ENCODE measurements at regions of chr20 and their contacts with region 1.

Region 1: DNA sequence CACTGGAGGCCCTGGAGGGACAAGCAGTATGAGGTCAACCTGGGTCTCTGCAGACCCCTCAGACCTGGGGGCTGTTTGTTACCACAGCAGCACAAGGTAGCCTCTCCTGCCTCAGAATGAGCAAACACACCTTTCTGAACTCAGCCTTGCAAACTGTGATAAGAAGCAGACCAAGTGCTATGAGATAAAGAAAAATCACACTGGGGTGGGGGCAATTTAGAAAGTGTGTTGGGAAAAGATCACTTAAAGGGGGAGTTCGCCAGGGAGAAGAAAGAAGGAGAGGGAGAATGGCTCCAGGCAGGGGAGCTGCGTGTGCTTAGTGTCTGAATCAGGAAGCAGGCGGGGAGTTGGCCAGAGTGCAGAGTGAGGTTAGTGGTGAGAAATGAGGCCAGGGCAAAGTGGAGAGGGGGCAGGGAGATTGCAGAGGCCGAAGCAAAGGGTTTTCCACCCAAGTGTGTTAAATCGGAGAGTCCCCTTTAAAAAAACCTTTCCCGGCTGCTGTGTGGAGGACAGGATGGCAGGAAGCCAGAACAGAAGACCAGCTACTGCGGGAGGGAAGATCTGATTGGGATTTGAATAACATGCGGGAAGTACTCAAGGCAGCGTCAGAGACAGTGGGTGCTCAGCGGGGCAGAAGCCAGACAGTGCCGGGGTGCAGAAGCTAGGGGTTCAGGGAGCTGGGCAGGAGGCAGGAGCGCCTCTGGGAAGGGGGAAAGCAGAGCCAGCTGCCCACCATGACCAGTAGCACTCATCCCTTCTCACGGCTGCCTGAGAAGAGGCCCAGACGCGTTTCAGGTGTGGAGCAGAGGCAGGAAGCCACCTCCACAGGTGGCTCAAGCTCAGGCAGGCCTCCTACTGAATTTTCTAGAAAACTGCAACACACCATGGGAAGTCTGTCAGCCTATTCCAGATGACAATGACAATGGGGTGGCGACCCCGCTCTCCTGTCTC is 9.0 kb downstream of the ADA start:
- DNase-seq: peak in 4 of 5 donors; percentile 34 to 53 (median 39)
- H3K4me3 ChIP-seq: peak overlapping the region; percentile 1 to 17
- H3K4me3 Mint-ChIP-seq: peak overlapping the region; percentile 36 to 87 (median 68)
- H3K27ac ChIP-seq: peak overlapping the region; percentile 82
- H3K27ac Mint-ChIP-seq: peak overlapping the region; percentile 94 to 99 (median 96)
- H3K4me1 ChIP-seq: peaks cover 68% of the 10 kb centered on the region
- H3K4me1 Mint-ChIP-seq: peaks cover 54 to 80% (median 67%) of the 10 kb centered on the region in 4 donors
- H3K27me3 ChIP-seq: no peaks in the 10 kb centered on the region
- H3K27me3 Mint-ChIP-seq: no peaks in the 10 kb centered on the region

Region 2: GRCh38 chr20:44210422-44211176 is 431.9 kb before region 1 on chr20 and contains the start of gene OSER1:
- CTCF ChIA-PET with region 1: no interaction called
- POLR2A ChIA-PET with region 1: interaction called, 3 read pairs
- intact Hi-C with region 1: loop called (anchors 10 kb)
- DNase-seq: peak; percentile 99
- H3K4me3 ChIP-seq: peak within 1 kb of the TSS; percentile 77 to 78
- H3K4me3 Mint-ChIP-seq: peak within 1 kb of the TSS; percentile 85 to 99 (median 94)
- H3K27ac ChIP-seq: peak within 1 kb of the TSS; percentile 98
- H3K27ac Mint-ChIP-seq: peak within 1 kb of the TSS; percentile 90 to 100 (median 98)
- H3K4me1 ChIP-seq: peaks cover 53% of the 10 kb centered on the region
- H3K4me1 Mint-ChIP-seq: peaks cover 42 to 79% (median 56%) of the 10 kb centered on the region in 4 donors
- H3K27me3 ChIP-seq: no peaks in the 10 kb centered on the region
- H3K27me3 Mint-ChIP-seq: no peaks in the 10 kb centered on the region
- total RNA-seq, gene OSER1: 35.5 to 36.6 TPM

Region 3: DNA sequence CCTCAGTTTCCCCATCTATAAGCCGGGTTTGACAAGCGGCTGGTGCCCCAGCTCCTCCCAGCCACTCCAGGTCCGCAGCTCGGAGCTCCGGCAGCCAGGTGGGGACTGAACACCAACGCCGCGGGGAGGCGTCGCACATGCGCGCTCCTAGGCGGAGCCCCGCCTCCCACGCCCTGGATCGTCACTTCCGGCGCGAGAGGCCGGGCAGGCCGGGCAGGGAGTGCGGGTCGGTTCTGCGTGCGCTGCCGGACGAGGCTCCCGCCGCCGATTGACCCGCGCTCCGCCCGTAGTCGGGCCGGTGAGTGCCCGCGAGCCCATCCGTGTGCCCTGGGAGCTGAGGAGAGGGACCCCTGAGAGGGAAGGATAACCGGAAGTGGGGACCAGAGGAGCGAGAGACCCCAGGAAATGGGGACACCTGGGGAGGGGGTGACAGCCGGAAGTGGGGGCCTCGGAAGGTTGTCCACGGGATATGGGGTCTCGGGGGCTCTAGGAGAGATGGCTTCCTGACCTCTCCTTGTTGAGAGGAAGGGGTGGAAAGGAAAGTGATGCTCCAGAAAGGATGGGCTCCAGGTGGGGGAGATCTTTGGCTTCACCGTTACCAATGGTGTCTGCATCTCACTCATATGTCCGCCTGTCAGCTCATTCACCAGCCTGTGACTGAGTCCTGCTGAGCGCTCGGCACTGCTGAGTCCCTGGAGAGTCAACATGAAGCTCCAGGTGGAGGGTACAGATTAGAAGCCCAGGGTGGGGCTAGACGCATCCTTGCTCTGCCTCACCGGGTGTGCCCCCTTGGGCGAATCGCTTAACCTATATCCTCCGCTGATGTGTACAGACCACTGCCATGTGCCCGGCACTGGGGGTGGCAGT is 166.6 kb before region 1 on chr20 and contains the start of gene TTPAL:
- CTCF ChIA-PET with region 1: no interaction called
- POLR2A ChIA-PET with region 1: interaction called, 10 read pairs
- intact Hi-C with region 1: no loop called
- DNase-seq: peak; percentile 85 to 89 (median 89)
- H3K4me3 ChIP-seq: peak within 1 kb of the TSS; percentile 53 to 72
- H3K4me3 Mint-ChIP-seq: peak within 1 kb of the TSS; percentile 88 to 94 (median 92)
- H3K27ac ChIP-seq: peak within 1 kb of the TSS; percentile 95
- H3K27ac Mint-ChIP-seq: peak within 1 kb of the TSS; percentile 92 to 99 (median 96)
- H3K4me1 ChIP-seq: peaks cover 17% of the 10 kb centered on the region
- H3K4me1 Mint-ChIP-seq: peaks cover 13 to 32% (median 25%) of the 10 kb centered on the region in 4 donors
- H3K27me3 ChIP-seq: no peaks in the 10 kb centered on the region
- H3K27me3 Mint-ChIP-seq: no peaks in the 10 kb centered on the region
- total RNA-seq, gene TTPAL: 17.5 to 18.9 TPM

Region 4: DNA sequence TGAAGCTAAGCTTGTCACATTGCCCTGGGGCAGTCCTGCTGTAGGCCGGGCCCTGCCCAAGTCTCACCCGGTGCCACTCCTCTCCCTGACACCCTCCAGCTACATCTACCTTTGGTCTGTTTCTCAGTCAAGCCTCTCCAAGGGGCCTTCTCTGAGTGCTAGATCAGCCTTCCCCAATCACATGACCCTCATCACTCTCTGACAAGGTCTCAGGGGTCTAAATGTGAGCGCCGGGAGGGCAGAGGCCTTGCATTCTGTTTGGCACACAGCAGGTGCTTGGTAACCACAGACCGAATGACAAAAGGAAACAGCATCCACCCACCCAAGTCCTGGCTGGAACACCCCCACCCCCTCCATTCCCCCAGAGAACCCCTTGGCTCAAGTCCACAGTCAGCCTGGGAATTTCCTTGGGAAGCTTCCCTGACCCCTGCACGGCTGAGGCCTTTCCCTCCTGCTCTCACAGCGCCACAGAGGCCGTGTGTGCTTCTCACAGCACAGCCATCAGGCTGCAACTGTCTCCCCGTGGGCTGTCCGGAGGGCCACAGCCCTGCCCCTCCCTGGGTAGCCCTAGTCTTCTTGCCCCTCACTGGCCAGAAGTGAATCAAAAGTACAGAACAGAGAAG is 27.2 kb before region 1 on chr20:
- CTCF ChIA-PET with region 1: interaction called, 8 read pairs
- POLR2A ChIA-PET with region 1: interaction called, 29 read pairs
- intact Hi-C with region 1: loop called (anchors 2 kb)
- DNase-seq: peak in 1 of 5 donors; percentile 9
- H3K4me3 ChIP-seq: no peak overlapping the region
- H3K4me3 Mint-ChIP-seq: peak overlapping the region in 5 of 8 donors; percentile 12 to 62 (median 52)
- H3K27ac ChIP-seq: no peak overlapping the region
- H3K27ac Mint-ChIP-seq: peak overlapping the region; percentile 78 to 94 (median 91)
- H3K4me1 ChIP-seq: peaks cover 36% of the 10 kb centered on the region
- H3K4me1 Mint-ChIP-seq: peaks cover 27 to 60% (median 41%) of the 10 kb centered on the region in 4 donors
- H3K27me3 ChIP-seq: no peaks in the 10 kb centered on the region
- H3K27me3 Mint-ChIP-seq: no peaks in the 10 kb centered on the region

Region 5: DNA sequence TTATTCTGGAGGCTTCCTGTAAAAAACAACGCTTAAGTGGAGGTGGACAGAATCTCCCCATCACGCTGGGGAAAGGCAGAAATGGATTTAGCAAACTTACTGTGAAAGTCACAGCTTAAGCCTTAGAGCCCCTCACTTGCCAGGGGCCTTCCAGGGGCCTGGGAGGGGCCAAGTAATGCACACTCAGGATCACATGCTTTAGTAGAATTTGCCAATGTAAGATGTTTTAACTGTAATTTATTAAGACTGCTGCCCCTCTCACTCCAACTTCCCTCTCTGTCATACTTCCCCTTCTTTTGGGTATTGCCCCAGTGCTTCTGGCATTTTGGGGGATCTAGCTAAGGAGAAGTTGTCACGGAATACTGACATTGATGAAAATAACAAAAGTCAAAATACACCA is 21.7 kb after region 1 on chr20:
- CTCF ChIA-PET with region 1: interaction called, 5 read pairs
- POLR2A ChIA-PET with region 1: interaction called, 18 read pairs
- intact Hi-C with region 1: no loop called
- DNase-seq: no peak
- H3K4me3 ChIP-seq: no peak overlapping the region
- H3K4me3 Mint-ChIP-seq: no peak overlapping the region
- H3K27ac ChIP-seq: no peak overlapping the region
- H3K27ac Mint-ChIP-seq: no peak overlapping the region
- H3K4me1 ChIP-seq: peaks cover 6% of the 10 kb centered on the region
- H3K4me1 Mint-ChIP-seq: peaks cover 3 to 10% (median 6%) of the 10 kb centered on the region in 4 donors
- H3K27me3 ChIP-seq: no peaks in the 10 kb centered on the region
- H3K27me3 Mint-ChIP-seq: no peaks in the 10 kb centered on the region

Region 6: GRCh38 chr20:44692932-44693476 is 50.5 kb after region 1 on chr20:
- CTCF ChIA-PET with region 1: no interaction called
- POLR2A ChIA-PET with region 1: no interaction called
- intact Hi-C with region 1: no loop called
- DNase-seq: no peak
- H3K4me3 ChIP-seq: no peak overlapping the region
- H3K4me3 Mint-ChIP-seq: no peak overlapping the region
- H3K27ac ChIP-seq: no peak overlapping the region
- H3K27ac Mint-ChIP-seq: no peak overlapping the region
- H3K4me1 ChIP-seq: no peaks in the 10 kb centered on the region
- H3K4me1 Mint-ChIP-seq: no peaks in the 10 kb centered on the region
- H3K27me3 ChIP-seq: no peaks in the 10 kb centered on the region
- H3K27me3 Mint-ChIP-seq: no peaks in the 10 kb centered on the region